CD8-positive, alpha-beta T cell (primary cell): ENCODE measurements at regions of chr4 and their contacts with region 1.

Region 1: DNA sequence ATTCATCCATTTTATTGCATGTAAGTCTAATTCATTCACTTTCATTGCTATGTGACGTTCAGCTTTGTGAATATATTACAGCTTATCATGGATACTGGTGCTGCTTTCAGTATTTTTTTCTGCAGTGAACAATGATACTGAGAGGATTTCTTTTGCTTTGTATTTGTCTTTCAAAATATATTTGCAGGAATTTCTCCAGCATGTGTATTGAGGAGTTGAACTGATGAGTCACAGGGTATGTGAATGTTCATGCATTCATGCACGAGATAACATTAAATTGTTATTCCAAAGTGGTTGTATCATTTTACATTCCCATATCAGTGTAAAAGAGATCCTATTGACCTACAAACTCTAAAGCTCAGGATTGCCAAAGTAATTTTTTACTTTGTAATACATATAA is 283.8 kb upstream of the ARSJ start:
- DNase-seq: no peak
- ATAC-seq: no peak
- H3K4me3 ChIP-seq: no peak overlapping the region
- H3K4me3 Mint-ChIP-seq: no peak overlapping the region
- H3K27ac ChIP-seq: no peak overlapping the region
- H3K27ac Mint-ChIP-seq: no peak overlapping the region
- H3K4me1 ChIP-seq: no peaks in the 10 kb centered on the region
- H3K4me1 Mint-ChIP-seq: no peaks in the 10 kb centered on the region
- H3K27me3 ChIP-seq: no peaks in the 10 kb centered on the region
- H3K27me3 Mint-ChIP-seq: no peaks in the 10 kb centered on the region
- CTCF ChIP-seq: no peak

Region 2: DNA sequence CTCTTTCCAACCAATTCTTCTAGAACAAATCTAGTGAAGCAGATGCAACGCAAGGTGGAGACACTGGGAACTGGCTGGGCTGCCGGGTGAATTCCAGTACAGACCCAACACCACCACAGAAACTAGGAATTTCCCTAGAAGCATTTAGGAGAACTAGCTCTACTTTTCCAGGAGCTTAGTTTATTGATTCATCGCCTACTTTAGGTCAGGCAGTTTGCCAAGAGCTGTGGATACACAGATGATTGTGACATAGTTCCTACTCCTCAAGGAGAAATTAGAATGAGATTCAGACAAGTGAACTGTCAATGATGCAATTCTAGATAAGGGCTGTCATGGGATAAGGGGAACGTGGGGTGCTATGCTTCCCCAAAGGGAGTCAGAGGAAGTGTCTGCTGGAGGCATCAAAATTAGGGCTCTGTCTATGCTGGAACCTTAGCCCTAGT is 851.7 kb before region 1 on chr4:
- CTCF ChIA-PET with region 1: no interaction called
- POLR2A ChIA-PET with region 1: no interaction called
- intact Hi-C with region 1: no loop called
- DNase-seq: no peak
- ATAC-seq: no peak
- H3K4me3 ChIP-seq: no peak overlapping the region
- H3K4me3 Mint-ChIP-seq: no peak overlapping the region
- H3K27ac ChIP-seq: no peak overlapping the region
- H3K27ac Mint-ChIP-seq: no peak overlapping the region
- H3K4me1 ChIP-seq: no peaks in the 10 kb centered on the region
- H3K4me1 Mint-ChIP-seq: no peaks in the 10 kb centered on the region
- H3K27me3 ChIP-seq: no peaks in the 10 kb centered on the region
- H3K27me3 Mint-ChIP-seq: peaks cover 5% of the 10 kb centered on the region
- CTCF ChIP-seq: no peak

Region 3: DNA sequence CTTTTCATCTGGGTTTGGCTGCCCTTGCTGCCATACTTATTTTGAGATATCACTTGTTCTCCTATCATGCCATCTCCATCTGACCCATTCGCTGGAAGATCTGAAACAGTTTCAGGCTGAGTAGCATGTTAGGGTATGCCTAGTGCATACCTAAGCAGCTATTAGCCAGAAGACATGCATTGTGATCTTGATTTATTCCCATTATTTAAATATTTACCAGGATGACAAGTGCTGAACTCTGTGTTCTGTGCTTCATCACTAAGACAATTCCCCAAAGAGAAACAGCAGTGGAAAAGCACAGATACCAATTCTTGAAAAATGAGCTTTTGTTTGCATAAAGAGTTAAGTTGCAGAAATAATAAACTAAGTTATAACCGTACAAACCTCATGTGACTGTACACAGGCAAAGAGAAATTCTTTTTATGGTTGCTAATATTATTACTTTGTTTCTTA is 12.8 kb before region 1 on chr4:
- CTCF ChIA-PET with region 1: no interaction called
- POLR2A ChIA-PET with region 1: no interaction called
- intact Hi-C with region 1: loop called (anchors 1 kb)
- DNase-seq: no peak
- ATAC-seq: no peak
- H3K4me3 ChIP-seq: no peak overlapping the region
- H3K4me3 Mint-ChIP-seq: no peak overlapping the region
- H3K27ac ChIP-seq: no peak overlapping the region
- H3K27ac Mint-ChIP-seq: no peak overlapping the region
- H3K4me1 ChIP-seq: no peaks in the 10 kb centered on the region
- H3K4me1 Mint-ChIP-seq: no peaks in the 10 kb centered on the region
- H3K27me3 ChIP-seq: no peaks in the 10 kb centered on the region
- H3K27me3 Mint-ChIP-seq: peaks cover 9% of the 10 kb centered on the region
- CTCF ChIP-seq: no peak